Caco-2 (cell line): ENCODE measurements at regions of chr4 and their contacts with region 1.

Region 1: GRCh38 chr4:140092094-140092849 is 61.7 kb downstream of the MAML3 start:
- DNase-seq: peak; percentile 53 to 64
- H3K4me3 ChIP-seq: peak overlapping the region; percentile 20
- H3K4me3 Mint-ChIP-seq: peak overlapping the region; percentile 73
- H3K27ac Mint-ChIP-seq: peak overlapping the region; percentile 63
- H3K4me1 ChIP-seq: peaks cover 58% of the 10 kb centered on the region
- H3K4me1 Mint-ChIP-seq: peaks cover 75% of the 10 kb centered on the region
- H3K27me3 ChIP-seq: no peaks in the 10 kb centered on the region
- H3K27me3 Mint-ChIP-seq: no peaks in the 10 kb centered on the region
- CTCF ChIP-seq: no peak

Region 2: DNA sequence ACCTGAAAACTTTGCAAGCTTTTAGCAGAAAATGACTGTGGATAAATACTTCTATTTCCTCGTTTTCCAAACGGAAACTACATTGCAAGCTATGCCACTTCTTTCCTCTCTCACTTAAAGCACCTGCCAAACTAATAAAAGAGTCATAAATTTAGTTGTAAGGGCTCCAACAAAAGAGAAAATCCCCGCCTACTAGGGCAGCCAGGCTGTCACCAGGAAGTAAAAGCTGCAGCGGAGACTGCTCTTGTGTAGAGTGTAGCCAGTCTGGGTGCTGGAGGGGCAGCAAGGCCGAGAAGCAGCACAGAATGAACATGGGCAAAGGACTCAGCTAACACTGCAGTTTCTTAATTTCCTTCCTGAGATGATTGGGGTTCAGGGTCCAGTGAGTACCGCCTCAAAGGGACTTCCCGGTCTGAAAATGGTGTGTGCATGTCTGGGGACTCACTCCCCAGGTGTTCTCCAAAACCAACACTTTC is 151.0 kb after region 1 on chr4:
- CTCF ChIA-PET with region 1: no interaction called
- POLR2A ChIA-PET with region 1: no interaction called
- intact Hi-C with region 1: loop called (anchors 1 kb)
- DNase-seq: peak in 1 of 2 experiments; percentile 31
- H3K4me3 ChIP-seq: no peak overlapping the region
- H3K4me3 Mint-ChIP-seq: no peak overlapping the region
- H3K27ac Mint-ChIP-seq: peak overlapping the region; percentile 58
- H3K4me1 ChIP-seq: peaks cover under 1% of the 10 kb centered on the region; the same call in 1 of the 2 replicates
- H3K4me1 Mint-ChIP-seq: peaks cover 20% of the 10 kb centered on the region
- H3K27me3 ChIP-seq: no peaks in the 10 kb centered on the region
- H3K27me3 Mint-ChIP-seq: no peaks in the 10 kb centered on the region
- CTCF ChIP-seq: no peak